Transverse colon (tissue), 4 donors: ENCODE measurements at regions of chr12 and their contacts with region 1.

Region 1: GRCh38 chr12:50167041-50167828 is at the start of gene CERS5:
- DNase-seq: peak; percentile 99
- H3K4me3 ChIP-seq: peak within 1 kb of the TSS; percentile 70 to 85 (median 80)
- H3K27ac ChIP-seq: peak within 1 kb of the TSS; percentile 88 to 93 (median 92)
- H3K4me1 ChIP-seq: peaks cover 2 to 22% (median 12%) of the 10 kb centered on the region in 4 donors
- H3K27me3 ChIP-seq: no peaks in the 10 kb centered on the region
- CTCF ChIP-seq: peak; percentile 23 to 59 (median 35)
- EP300 ChIP-seq: no peak
- POLR2A ChIP-seq: peak; percentile 73
- total RNA-seq, gene CERS5: 17.5 to 32.5 (median 21.0) TPM

Region 2: GRCh38 chr12:50111693-50112455 is 55.4 kb before region 1 on chr12 and contains the start of gene COX14:
- in situ Hi-C with region 1: loop called in 1 of 4 experiments (anchors 10 kb)
- intact Hi-C with region 1: loop called (anchors 10 kb)
- DNase-seq: peak; percentile 99
- H3K4me3 ChIP-seq: peak within 1 kb of the TSS; percentile 67 to 93 (median 80)
- H3K27ac ChIP-seq: peak within 1 kb of the TSS; percentile 95 to 100 (median 98)
- H3K4me1 ChIP-seq: peaks cover 34 to 48% (median 40%) of the 10 kb centered on the region in 4 donors
- H3K27me3 ChIP-seq: no peaks in the 10 kb centered on the region
- CTCF ChIP-seq: peak; percentile 86 to 95 (median 89)
- EP300 ChIP-seq: peak; percentile 76
- POLR2A ChIP-seq: peak; percentile 98
- total RNA-seq, gene COX14: 22.1 to 107 (median 62.0) TPM

Region 3: DNA sequence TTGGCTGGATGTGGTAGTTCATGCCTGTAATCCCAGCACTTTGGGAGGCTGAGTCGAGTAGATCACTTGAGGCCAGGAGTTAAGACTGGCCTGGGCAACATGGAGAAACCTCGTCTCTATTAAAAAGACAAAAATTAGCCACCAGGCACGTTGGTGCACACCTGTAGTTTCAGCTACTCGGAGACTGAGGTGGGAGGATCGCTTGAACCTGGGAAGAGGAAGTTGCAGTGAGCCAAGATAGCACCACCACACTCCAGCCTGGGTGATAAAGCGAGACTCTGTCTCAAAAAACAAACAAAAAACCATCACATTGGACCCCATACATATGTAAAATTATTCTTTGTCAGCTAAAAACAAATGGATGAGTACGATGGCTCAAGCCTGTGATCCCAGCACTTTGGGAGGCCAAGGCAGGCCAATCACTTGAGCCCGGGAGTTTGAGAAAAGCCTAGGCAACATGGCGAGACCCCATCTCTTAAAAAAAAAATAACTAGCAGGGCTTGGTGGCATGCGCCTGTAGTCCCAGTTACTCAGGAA is 72.2 kb after region 1 on chr12:
- in situ Hi-C with region 1: no loop called
- intact Hi-C with region 1: loop called (anchors 2 kb)
- DNase-seq: no peak
- H3K4me3 ChIP-seq: no peak overlapping the region
- H3K27ac ChIP-seq: peak overlapping the region; percentile 82 to 90 (median 88)
- H3K4me1 ChIP-seq: peaks cover 7 to 68% (median 43%) of the 10 kb centered on the region in 4 donors
- H3K27me3 ChIP-seq: no peaks in the 10 kb centered on the region
- CTCF ChIP-seq: no peak
- EP300 ChIP-seq: no peak
- POLR2A ChIP-seq: no peak

Region 4: GRCh38 chr12:51293696-51294095 is 1126.5 kb after region 1 on chr12:
- in situ Hi-C with region 1: no loop called
- intact Hi-C with region 1: no loop called
- DNase-seq: no peak
- H3K4me3 ChIP-seq: no peak overlapping the region
- H3K27ac ChIP-seq: no peak overlapping the region
- H3K4me1 ChIP-seq: peaks cover 0 to 10% (median 0%) of the 10 kb centered on the region in 4 donors
- H3K27me3 ChIP-seq: no peaks in the 10 kb centered on the region
- CTCF ChIP-seq: no peak
- EP300 ChIP-seq: no peak
- POLR2A ChIP-seq: no peak